ENCODE measurements at regions of chr1 and their contacts with region 1.

Region 1: DNA sequence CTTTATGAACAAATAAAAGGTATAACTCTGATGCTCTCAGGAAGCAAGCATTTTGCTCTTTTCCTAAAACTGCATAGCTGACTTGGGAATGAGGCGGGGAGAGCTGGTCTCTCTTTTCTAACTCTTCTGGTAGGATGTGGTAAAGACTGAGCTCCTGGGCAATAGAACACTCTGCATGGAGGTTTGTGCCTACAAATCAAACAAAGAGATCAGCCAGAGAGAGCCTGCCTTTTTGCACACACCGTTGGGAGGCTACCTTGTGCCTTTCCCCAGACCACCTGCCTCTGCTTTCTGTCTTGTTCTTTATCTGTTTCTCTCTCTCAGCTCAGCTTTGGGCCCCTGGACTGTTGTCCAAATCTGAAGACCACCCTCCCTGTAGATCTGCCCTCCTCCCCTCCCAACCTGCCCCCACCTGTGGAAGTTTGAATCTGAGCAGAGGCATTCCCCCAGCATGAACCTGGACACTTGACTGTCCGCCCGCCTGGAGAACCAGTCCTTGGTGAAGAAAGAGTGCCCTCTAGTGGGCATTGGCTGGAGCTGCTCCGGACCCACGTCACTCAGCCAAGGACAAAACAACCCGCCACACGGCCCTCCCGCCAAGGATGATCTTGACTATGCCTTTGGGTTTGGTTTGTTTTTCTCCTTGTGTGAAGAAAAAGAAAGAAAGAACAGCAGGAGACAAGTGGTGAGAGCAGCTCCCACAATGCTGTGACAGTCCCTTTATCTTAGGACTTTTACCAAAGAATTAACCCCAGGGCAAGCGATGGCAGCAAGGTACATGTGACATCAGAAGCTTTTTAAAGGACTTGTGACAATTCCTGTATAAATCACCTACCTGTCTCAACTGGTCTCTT is 228.2 kb downstream of the PBX1 start:
- DNase-seq: peak; percentile 95
- H3K4me3 ChIP-seq: no peak overlapping the region
- H3K27ac ChIP-seq: peak overlapping the region; percentile 72 to 87 (median 77)
- H3K4me1 ChIP-seq: peaks cover 0 to 92% (median 86%) of the 10 kb centered on the region in 4 donors
- H3K27me3 ChIP-seq: no peaks in the 10 kb centered on the region
- CTCF ChIP-seq: peak; percentile 85 to 93 (median 88)
- EP300 ChIP-seq: no peak
- POLR2A ChIP-seq: no peak

Region 2: GRCh38 chr1:164165462-164165861 is 621.7 kb before region 1 on chr1:
- intact Hi-C with region 1: loop called (anchors 5 kb)
- DNase-seq: no peak
- H3K4me3 ChIP-seq: no peak overlapping the region
- H3K27ac ChIP-seq: no peak overlapping the region
- H3K4me1 ChIP-seq: no peaks in the 10 kb centered on the region
- H3K27me3 ChIP-seq: no peaks in the 10 kb centered on the region
- CTCF ChIP-seq: no peak
- EP300 ChIP-seq: no peak
- POLR2A ChIP-seq: no peak

Region 3: GRCh38 chr1:164558461-164559341 is 228.5 kb before region 1 on chr1 and contains the start of gene PBX1:
- intact Hi-C with region 1: loop called (anchors 5 kb)
- DNase-seq: peak; percentile 100
- H3K4me3 ChIP-seq: peak within 1 kb of the TSS; percentile 67 to 90 (median 84)
- H3K27ac ChIP-seq: peak within 1 kb of the TSS; percentile 82 to 94 (median 88)
- H3K4me1 ChIP-seq: peaks cover 0 to 8% (median 3%) of the 10 kb centered on the region in 4 donors
- H3K27me3 ChIP-seq: no peaks in the 10 kb centered on the region
- CTCF ChIP-seq: no peak
- EP300 ChIP-seq: no peak
- POLR2A ChIP-seq: peak; percentile 66 to 82
- total RNA-seq, gene PBX1: 118 to 168 (median 161) TPM

Region 4: DNA sequence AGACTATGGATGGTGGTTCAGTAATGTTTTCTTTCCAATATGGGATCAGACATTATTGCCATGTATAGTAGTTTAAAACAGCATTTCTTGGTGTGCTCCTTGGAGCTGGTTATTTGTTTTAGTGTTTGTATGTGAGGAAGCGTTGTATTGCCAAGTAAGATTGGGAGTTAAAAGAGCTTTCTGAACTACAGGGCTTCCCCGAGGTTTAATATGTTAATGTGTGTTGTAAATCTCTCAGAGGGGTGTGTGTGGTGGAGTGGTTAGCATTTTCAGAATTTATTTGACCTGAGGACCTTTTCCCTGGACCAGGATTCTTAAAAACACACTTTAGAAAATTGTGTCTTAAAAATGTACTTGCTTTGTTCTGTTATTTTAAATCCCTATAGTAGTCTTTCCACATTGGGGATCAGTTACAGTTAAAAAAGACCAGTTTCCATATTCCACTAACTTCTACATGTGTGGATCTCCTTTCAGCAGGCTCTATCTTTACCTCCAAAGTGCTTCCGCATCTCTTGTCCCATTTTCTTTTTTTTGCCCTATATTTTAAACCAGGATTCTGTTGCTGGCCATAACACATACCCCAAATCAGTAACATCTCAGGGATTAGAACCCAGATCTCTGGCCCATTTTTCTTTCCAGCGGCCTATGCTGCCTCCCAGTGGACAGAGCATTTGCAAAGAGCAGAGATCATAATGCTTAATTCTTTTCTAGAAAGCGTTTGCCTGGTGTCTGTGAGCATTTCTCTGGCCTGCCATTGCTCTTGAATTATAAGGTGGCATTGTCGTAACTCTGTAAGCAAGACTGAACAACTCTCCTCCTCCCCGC is 169.6 kb before region 1 on chr1:
- intact Hi-C with region 1: loop called (anchors 5 kb)
- DNase-seq: no peak
- H3K4me3 ChIP-seq: no peak overlapping the region
- H3K27ac ChIP-seq: peak overlapping the region; percentile 46 to 73 (median 62)
- H3K4me1 ChIP-seq: peaks cover 0 to 97% (median 93%) of the 10 kb centered on the region in 4 donors
- H3K27me3 ChIP-seq: no peaks in the 10 kb centered on the region
- CTCF ChIP-seq: peak; percentile 22 to 63 (median 52)
- EP300 ChIP-seq: no peak
- POLR2A ChIP-seq: no peak

Region 5: GRCh38 chr1:164699815-164700491 is 87.3 kb before region 1 on chr1:
- intact Hi-C with region 1: loop called (anchors 2 kb)
- DNase-seq: peak; percentile 92
- H3K4me3 ChIP-seq: peak overlapping the region; percentile 8 to 32 (median 12)
- H3K27ac ChIP-seq: peak overlapping the region; percentile 77 to 87 (median 80)
- H3K4me1 ChIP-seq: peaks cover 0 to 85% (median 80%) of the 10 kb centered on the region in 4 donors
- H3K27me3 ChIP-seq: no peaks in the 10 kb centered on the region
- CTCF ChIP-seq: no peak
- EP300 ChIP-seq: peak; percentile 76 to 90 (median 86)
- POLR2A ChIP-seq: no peak